ENCODE measurements at regions of chr5 and their contacts with region 1.

Region 1: DNA sequence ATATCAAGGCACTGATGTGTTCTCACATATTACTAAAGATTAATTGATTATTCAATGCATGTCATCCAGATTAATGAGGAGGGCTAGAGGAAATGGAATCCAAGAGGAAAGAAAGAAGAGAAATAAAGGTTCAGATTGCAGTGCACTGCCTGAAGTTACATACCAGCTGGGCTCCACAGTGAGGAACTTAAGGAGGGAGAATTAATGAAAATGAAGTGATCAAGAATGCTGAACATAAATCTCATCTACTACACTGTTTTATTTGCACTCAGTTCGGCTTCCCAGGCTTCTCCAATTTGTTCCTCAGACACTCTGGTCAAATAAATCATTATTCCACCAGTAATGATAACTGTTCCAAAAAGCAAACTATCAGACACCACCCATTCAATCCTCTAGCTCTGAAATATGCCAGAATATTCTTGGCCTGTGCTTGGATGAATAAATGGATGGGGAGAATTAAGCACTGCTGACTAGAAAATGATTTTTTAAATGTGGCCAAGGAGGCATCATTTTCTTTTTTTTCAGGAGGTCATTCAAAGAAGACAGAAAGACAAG is 88.6 kb upstream of the FBN2 start:
- DNase-seq: no peak
- H3K4me3 Mint-ChIP-seq: no peak overlapping the region
- H3K27ac Mint-ChIP-seq: no peak overlapping the region
- H3K4me1 Mint-ChIP-seq: peaks cover under 1% of the 10 kb centered on the region
- H3K27me3 Mint-ChIP-seq: no peaks in the 10 kb centered on the region
- CTCF ChIP-seq: no peak

Region 2: DNA sequence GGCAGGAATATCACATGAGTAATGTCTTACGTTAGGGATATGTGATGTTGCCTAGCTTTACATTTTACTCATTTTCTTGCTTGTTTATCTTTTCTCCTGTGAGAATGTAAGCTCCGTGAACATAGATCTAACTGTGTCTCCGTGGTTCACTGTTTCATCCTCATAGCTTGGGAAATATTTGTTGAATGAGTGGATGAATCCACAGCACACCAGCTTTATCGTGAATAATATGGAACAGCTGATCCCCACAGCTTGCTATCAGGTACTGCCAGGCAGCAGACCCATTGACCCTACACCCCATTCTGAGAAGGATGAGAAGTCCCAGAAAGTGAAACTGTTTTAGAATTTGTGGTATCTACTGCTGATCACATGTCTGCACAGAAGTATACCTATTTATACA is 18.2 kb after region 1 on chr5:
- CTCF ChIA-PET with region 1: no interaction called
- POLR2A ChIA-PET with region 1: interaction called, 3 read pairs
- intact Hi-C with region 1: loop called (anchors 1 kb)
- DNase-seq: peak; percentile 42
- H3K4me3 Mint-ChIP-seq: peak overlapping the region; percentile 50
- H3K27ac Mint-ChIP-seq: peak overlapping the region; percentile 43
- H3K4me1 Mint-ChIP-seq: peaks cover 28% of the 10 kb centered on the region
- H3K27me3 Mint-ChIP-seq: no peaks in the 10 kb centered on the region
- CTCF ChIP-seq: no peak